HepG2 (cell line): ENCODE measurements at regions of chr2 and their contacts with region 1.

Region 1: DNA sequence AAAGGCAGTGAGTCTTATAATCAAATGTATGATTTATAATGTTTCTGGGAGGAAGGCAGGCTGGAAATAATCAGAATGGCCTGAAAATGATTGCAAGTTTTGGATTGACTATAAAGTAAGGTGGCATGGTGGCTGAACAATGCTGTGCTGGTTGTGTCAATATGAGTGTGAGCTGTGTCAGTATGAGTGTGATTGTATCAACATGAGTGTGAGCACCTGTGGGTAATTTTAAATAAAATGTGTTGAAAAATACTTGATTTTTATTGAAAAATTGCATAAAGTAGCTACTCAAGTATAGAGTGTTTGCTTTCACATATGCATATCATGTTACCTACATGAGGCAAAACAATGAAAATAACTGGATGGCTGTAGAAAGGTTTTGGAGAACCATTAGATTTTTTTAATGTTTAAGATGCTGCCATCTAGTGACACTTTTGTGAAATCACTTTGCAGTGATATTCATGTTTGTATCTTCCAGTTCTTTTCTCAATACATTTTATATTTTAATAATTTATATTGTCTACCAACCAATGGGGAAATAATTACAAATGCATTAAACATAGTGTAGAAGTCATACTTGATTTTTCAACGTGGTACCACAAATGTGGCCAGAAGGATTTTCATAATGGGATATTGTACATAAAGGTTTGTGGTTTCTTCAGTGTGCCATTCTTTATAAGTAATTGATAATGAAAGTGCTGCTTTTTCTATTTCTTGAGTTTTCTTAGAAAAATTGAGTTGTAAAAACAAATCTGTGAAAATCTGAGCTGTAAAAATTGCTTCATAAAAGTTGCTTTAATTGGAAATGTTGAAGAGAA is 103.3 kb downstream of the KYNU start:
- DNase-seq: peak; percentile 49
- ATAC-seq: peak; percentile 59
- H3K4me3 ChIP-seq: no peak overlapping the region
- H3K27ac ChIP-seq: no peak overlapping the region
- H3K4me1 ChIP-seq: peaks cover 32% of the 10 kb centered on the region
- H3K27me3 ChIP-seq: no peaks in the 10 kb centered on the region
- CTCF ChIP-seq: peak; percentile 64
- EP300 ChIP-seq: no peak
- POLR2A ChIP-seq: no peak
- RAD21 ChIP-seq: peak; percentile 62

Region 2: DNA sequence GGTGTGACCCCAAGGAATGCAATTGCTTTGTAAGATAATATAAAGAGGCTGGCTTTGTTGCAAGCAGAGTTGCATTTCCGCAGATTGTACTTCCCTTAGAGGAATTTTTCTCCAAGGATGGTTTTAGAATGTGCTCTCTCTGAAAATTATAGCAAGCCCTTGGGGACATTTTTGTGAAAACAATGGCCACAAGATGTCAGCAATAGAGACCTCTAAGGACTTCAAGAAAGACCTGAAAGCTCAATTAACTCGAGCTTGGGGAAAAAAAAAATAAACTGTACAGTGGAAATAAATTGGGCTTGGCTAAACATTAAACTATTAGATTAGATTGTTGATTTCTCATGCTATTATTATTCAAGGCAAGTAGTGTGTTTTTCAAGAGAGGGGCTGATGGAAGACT is 184.6 kb before region 1 on chr2:
- CTCF ChIA-PET with region 1: interaction called, 7 read pairs
- POLR2A ChIA-PET with region 1: no interaction called
- in situ Hi-C with region 1: loop called (anchors 5 kb)
- intact Hi-C with region 1: loop called (anchors 1 kb)
- DNase-seq: peak; percentile 31
- ATAC-seq: peak; percentile 60; the same call in 1 of the 3 replicates
- H3K4me3 ChIP-seq: no peak overlapping the region
- H3K27ac ChIP-seq: no peak overlapping the region
- H3K4me1 ChIP-seq: no peaks in the 10 kb centered on the region
- H3K27me3 ChIP-seq: no peaks in the 10 kb centered on the region; a peak in 1 of 5 replicates
- CTCF ChIP-seq: peak; percentile 31; the same call in 1 of the 2 replicates
- EP300 ChIP-seq: no peak
- POLR2A ChIP-seq: no peak
- RAD21 ChIP-seq: 0 out of 2 replicates have a peak, but pooled peaks have one; percentile 21